HEK293 (cell line): ENCODE measurements at regions of chr19 and their contacts with region 1.

Region 1: GRCh38 chr19:42343344-42344110 is 18.1 kb downstream of the MEGF8 start:
- H3K4me3 ChIP-seq: no peak overlapping the region
- H3K27ac ChIP-seq: no peak overlapping the region
- H3K4me1 ChIP-seq: no peaks in the 10 kb centered on the region
- CTCF ChIP-seq: peak; percentile 80

Region 2: GRCh38 chr19:42330241-42330711 is 13.3 kb before region 1 on chr19:
- CTCF ChIA-PET with region 1: interaction called, 12 read pairs
- POLR2A ChIA-PET with region 1: no interaction called
- H3K4me3 ChIP-seq: no peak overlapping the region
- H3K27ac ChIP-seq: peak overlapping the region; percentile 53; the same call in 1 of the 2 replicates
- H3K4me1 ChIP-seq: peaks cover 40% of the 10 kb centered on the region
- CTCF ChIP-seq: no peak

Region 3: DNA sequence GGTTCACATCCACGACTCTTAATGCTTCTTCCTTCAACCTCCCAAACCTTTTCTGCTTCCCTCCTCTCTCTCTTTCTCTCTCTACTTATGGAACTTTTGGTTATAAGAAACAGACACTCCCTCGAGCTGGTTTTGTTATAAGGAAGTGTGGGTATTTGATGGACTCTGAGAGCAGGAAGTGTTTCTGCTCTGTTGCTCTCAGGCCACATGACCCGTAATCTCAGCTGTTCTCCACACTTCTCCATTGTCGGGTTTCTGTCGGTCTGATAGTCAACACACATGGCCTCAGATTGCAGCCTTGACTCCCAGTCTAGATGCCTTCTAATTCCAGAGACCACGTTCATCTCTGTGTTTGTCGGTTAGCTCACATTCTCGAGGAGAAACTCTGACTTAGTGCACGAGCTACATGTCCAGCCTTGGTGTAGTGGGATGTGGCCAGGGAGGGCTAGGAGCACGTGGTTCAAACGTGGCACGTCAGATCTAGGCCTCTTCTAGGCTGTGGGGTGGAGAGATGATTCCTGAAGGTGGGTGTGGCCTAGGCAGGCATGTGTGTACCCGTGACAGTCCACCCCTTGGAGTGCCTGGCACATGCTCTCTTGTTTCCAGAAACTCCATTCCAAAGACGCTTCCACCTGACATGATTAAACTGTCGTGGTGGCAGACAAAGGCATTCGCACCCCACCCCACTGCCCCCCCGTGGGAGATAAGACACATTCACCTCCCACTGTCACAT is 20.3 kb after region 1 on chr19:
- CTCF ChIA-PET with region 1: interaction called, 10 read pairs
- POLR2A ChIA-PET with region 1: no interaction called
- H3K4me3 ChIP-seq: no peak overlapping the region
- H3K27ac ChIP-seq: no peak overlapping the region
- H3K4me1 ChIP-seq: 0 out of 2 replicates have a peak, but pooled peaks cover 3% of the 10 kb centered on the region
- CTCF ChIP-seq: no peak

Region 4: GRCh38 chr19:42480335-42481095 is 137.0 kb after region 1 on chr19:
- CTCF ChIA-PET with region 1: no interaction called
- POLR2A ChIA-PET with region 1: no interaction called
- H3K4me3 ChIP-seq: no peak overlapping the region
- H3K27ac ChIP-seq: no peak overlapping the region
- H3K4me1 ChIP-seq: peaks cover 7% of the 10 kb centered on the region
- CTCF ChIP-seq: no peak